Astrocyte of the cerebellum (primary cell): ENCODE measurements at regions of chr9 and their contacts with region 1.

Region 1: DNA sequence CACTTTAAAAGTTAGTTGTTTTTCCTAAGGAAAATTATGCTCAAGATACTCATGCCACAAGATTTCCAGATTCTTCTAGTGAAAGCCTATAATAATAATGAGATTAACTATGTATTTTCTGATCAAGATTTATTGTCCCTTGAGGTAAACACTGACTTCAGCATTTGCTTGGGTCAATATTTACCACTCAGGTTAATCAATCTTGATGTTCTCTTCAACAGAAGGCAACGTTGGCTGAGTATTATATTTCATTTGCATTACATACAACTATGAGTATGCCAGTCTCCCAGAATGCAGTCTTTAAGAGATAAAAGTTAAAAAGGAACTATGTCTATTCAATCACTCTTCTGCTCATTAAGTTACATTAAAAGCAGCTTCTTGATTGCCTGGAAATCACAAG is 115.6 kb downstream of the GPR21 start:
- DNase-seq: no peak
- H3K4me3 ChIP-seq: no peak overlapping the region
- CTCF ChIP-seq: no peak

Region 2: DNA sequence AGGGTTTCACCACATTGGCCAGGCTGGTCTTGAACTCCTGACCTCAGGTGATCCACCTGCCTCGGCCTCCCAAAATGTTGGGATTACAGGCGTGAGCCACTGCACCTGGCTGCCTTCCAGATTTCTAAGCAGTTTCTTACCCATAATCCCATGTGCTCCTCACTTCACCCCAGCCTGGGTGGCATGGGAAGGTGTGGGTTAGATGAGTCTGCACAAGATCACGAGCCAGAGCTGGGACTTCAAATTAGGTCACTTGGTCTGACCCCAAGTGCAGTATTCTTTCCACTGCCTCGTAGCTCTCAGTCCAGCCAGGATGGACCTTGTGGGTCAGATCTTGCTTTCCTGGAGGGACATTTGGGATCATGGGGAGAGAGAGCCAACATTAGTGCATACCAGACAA is 156.8 kb after region 1 on chr9:
- in situ Hi-C with region 1: loop called (anchors 5 kb)
- DNase-seq: no peak
- H3K4me3 ChIP-seq: no peak overlapping the region
- CTCF ChIP-seq: no peak